AG04450 (cell line): ENCODE measurements at regions of chr5 and their contacts with region 1.

Region 1: GRCh38 chr5:154072414-154073171 is 33.8 kb downstream of the MFAP3 start:
- DNase-seq: peak; percentile 33
- H3K4me3 ChIP-seq: no peak overlapping the region
- H3K27ac ChIP-seq: no peak overlapping the region
- H3K27me3 ChIP-seq: no peaks in the 10 kb centered on the region
- CTCF ChIP-seq: peak; percentile 97

Region 2: GRCh38 chr5:154038707-154039457 is 33.7 kb before region 1 on chr5 and contains the starts of genes FAM114A2 and MFAP3:
- CTCF ChIA-PET with region 1: interaction called, 11 read pairs
- POLR2A ChIA-PET with region 1: interaction called, 3 read pairs
- DNase-seq: peak; percentile 45
- H3K4me3 ChIP-seq: peak within 1 kb of the TSS; percentile 93
- H3K27ac ChIP-seq: peak within 1 kb of the TSS; percentile 81
- H3K27me3 ChIP-seq: no peaks in the 10 kb centered on the region
- CTCF ChIP-seq: no peak
- polyA plus RNA-seq, gene FAM114A2: 19.4 and 23.8 TPM in 2 replicates
- polyA plus RNA-seq, gene MFAP3: 35.7 and 44.8 TPM in 2 replicates

Region 3: GRCh38 chr5:154058055-154059038 is 14.2 kb before region 1 on chr5:
- CTCF ChIA-PET with region 1: interaction called, 23 read pairs
- POLR2A ChIA-PET with region 1: no interaction called
- DNase-seq: no peak
- H3K4me3 ChIP-seq: no peak overlapping the region
- H3K27ac ChIP-seq: no peak overlapping the region
- H3K27me3 ChIP-seq: no peaks in the 10 kb centered on the region
- CTCF ChIP-seq: no peak

Region 4: GRCh38 chr5:154189819-154190594 is 117.4 kb after region 1 on chr5:
- CTCF ChIA-PET with region 1: interaction called, 19 read pairs
- POLR2A ChIA-PET with region 1: interaction called, 3 read pairs
- DNase-seq: no peak
- H3K4me3 ChIP-seq: peak overlapping the region; percentile 79
- H3K27ac ChIP-seq: no peak overlapping the region
- H3K27me3 ChIP-seq: no peaks in the 10 kb centered on the region
- CTCF ChIP-seq: peak; percentile 60

Region 5: DNA sequence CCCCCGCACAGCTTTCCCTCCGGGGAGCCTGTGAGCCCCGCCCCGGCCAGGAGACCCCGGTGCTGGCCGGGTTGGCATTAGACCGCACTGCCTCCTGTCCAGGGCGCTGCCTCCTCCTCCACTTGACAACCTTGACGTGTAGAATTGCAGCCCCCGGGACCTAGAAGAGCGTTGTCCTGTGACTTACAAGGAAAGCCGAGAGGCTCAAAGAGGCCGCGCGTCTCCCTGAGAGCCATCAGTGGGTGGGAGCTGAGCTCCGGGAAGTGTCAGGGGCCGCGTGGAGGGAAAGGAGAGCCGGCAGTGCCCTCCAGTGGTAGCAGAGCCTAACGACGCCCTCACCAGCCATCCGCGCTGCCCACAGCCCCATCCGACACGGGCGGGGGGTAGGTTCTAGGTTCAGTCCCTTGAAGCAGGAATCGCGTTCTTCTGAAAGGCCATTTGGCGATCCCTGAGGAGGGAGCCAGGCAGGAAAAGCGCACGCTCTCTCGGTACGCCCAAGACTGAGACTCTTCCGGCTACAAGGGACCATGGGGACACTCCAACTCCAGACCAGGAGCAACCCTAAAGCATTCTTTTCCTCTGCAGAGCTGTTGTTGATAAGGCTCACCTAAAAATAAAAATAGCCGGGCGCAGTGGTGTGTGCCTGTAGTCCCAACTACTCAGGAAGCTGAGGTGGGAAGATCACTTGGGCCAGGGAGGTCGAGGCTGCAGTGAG is 332.6 kb after region 1 on chr5:
- CTCF ChIA-PET with region 1: interaction called, 97 read pairs
- POLR2A ChIA-PET with region 1: interaction called, 5 read pairs
- DNase-seq: peak; percentile 43
- H3K4me3 ChIP-seq: peak overlapping the region; percentile 45
- H3K27ac ChIP-seq: no peak overlapping the region
- H3K27me3 ChIP-seq: no peaks in the 10 kb centered on the region
- CTCF ChIP-seq: peak; percentile 88

Region 6: DNA sequence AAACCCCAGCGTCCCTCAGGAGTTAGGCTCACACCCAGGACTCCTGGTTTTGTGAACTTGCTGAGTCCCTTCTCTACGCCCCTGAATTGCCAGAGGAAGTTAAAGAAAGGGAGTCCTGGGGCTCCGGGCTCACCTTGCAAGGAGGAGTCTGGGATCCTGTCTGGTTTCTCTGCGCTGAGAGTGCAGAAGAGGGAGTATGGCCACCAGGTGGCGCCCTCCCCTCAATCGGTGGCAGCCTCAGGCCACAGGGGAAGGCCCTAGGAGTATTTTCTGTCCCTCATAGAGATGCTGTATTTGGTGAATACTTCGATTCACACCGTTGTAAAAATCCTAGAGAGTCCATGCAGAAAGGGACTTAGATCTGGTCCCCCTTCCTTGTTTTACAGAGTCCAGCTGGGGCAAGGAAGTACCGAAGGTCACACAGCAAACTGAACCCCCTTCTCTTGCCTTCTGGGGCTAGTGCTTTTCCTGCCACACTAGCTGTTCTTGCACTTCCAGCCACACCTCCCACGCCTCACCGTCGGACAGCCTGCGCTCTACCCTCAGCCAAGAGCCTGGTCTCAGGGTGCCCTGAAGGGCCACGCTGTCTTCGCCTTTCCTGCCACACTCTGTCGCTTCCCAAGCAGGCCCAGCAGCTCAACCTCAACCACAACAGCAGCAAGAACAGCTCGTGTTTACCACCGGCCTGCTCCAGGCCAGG is 395.2 kb after region 1 on chr5:
- CTCF ChIA-PET with region 1: interaction called, 68 read pairs
- POLR2A ChIA-PET with region 1: interaction called, 3 read pairs
- DNase-seq: no peak
- H3K4me3 ChIP-seq: no peak overlapping the region
- H3K27ac ChIP-seq: no peak overlapping the region
- H3K27me3 ChIP-seq: peaks cover 38% of the 10 kb centered on the region
- CTCF ChIP-seq: peak; percentile 92